ENCODE measurements at regions of chr3 and their contacts with region 1.

Region 1: DNA sequence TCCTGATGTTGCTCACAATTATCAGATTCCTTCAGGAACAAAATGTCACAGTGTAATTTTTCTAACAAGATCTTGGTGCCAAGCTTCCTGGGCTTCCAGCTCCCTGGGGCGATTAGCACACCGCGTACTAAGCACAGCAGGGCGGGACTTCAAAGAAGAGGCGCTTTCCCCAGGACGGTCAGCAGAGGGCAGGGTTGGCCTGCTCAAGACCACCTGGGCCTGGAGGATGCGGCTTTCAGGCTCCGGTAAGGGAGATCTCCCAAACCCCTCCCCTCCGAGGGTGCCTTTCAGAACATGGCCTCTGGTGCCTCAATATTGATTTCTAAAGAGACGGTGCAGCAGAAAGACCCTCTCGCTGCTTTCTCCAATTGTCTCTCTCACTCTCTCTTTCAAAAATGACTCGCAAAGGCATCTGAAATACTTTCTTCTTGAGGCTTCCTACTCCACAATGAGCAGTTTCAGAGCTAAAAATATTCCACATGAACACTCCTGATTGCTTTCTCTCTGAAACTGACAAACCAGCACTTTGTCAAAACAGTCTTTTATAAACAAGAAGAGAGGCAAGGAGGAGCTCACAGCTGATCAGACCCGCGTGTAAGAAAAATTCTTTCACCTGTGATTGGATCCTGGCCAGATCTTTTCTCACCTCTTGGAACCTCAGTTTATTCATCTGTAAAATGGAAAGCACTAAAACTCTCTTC is 154.0 kb downstream of the ADAMTS9 start:
- DNase-seq: peak; percentile 87
- ATAC-seq: peak; percentile 98
- H3K4me3 ChIP-seq: no peak overlapping the region
- H3K27ac ChIP-seq: no peak overlapping the region
- H3K4me1 ChIP-seq: peaks cover 3% of the 10 kb centered on the region; the same call in 1 of the 2 replicates
- H3K27me3 ChIP-seq: no peaks in the 10 kb centered on the region; the same call in 1 of the 2 replicates
- CTCF ChIP-seq: peak; percentile 86
- POLR2A ChIP-seq: no peak
- RAD21 ChIP-seq: peak; percentile 92

Region 2: GRCh38 chr3:64501298-64501906 is 32.4 kb before region 1 on chr3:
- CTCF ChIA-PET with region 1: interaction called, 10 read pairs
- POLR2A ChIA-PET with region 1: interaction called, 4 read pairs
- dilution Hi-C with region 1: no loop called
- in situ Hi-C with region 1: no loop called
- intact Hi-C with region 1: no loop called
- DNase-seq: peak; percentile 97
- ATAC-seq: peak; percentile 88
- H3K4me3 ChIP-seq: no peak overlapping the region
- H3K27ac ChIP-seq: peak overlapping the region; percentile 97
- H3K4me1 ChIP-seq: peaks cover 9% of the 10 kb centered on the region
- H3K27me3 ChIP-seq: no peaks in the 10 kb centered on the region
- CTCF ChIP-seq: no peak
- POLR2A ChIP-seq: no peak
- RAD21 ChIP-seq: no peak

Region 3: DNA sequence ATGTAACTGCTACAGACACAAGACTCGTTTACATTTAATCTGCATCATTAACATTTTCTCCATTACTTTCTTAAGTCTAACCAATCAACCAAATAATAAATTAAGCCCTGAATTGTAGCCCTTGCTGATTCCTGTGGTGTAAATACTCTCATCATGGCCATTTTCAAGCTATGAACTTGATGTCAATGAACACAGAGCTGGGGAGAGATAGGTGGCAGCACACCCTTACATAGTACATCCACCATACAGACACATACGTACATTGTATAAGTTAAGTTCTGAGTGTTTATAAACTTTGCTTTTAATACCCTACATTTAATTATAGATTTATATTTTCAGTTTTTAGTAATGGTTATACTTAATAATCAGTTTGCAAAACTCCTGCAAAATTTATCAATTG is 72.4 kb after region 1 on chr3:
- CTCF ChIA-PET with region 1: no interaction called
- POLR2A ChIA-PET with region 1: no interaction called
- dilution Hi-C with region 1: no loop called
- in situ Hi-C with region 1: no loop called
- intact Hi-C with region 1: no loop called
- DNase-seq: no peak
- ATAC-seq: no peak
- H3K4me3 ChIP-seq: no peak overlapping the region
- H3K27ac ChIP-seq: no peak overlapping the region
- H3K4me1 ChIP-seq: no peaks in the 10 kb centered on the region
- H3K27me3 ChIP-seq: no peaks in the 10 kb centered on the region
- CTCF ChIP-seq: no peak
- POLR2A ChIP-seq: no peak
- RAD21 ChIP-seq: no peak

Region 4: DNA sequence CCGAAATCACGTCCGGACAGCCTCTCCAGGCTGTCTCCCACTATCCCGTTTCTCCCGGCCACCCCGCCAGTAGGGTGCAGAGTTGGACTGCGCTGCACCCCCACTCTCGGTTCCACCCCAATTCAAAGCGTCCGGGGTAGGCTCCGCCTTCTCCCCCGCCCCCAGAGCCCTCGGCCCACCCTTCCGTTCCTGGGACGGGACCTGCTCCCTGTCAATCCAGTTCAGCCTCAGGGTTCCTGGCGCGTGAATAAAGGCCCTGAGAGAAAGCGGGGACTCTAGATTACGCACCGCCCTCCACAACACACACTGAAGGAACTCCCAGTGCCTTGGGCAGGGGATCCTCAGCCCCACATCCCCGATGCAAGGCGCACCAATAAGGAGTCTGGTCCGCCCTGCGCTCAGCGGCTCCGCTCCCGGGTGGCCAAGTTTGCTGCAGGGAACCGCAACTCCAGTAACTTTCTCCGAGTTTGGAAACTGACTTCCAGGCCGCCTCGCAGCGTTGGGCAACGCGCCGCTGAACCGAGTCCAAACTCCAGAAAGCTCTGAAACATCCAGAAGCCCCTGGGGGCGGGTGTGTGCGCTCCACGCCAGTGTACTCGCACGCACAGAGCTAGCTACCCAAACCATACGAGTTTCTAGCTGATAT is 152.2 kb after region 1 on chr3:
- CTCF ChIA-PET with region 1: no interaction called
- POLR2A ChIA-PET with region 1: no interaction called
- dilution Hi-C with region 1: no loop called
- in situ Hi-C with region 1: no loop called
- intact Hi-C with region 1: loop called (anchors 2 kb)
- DNase-seq: peak; percentile 88
- ATAC-seq: peak; percentile 83
- H3K4me3 ChIP-seq: peak overlapping the region; percentile 64
- H3K27ac ChIP-seq: peak overlapping the region; percentile 89
- H3K4me1 ChIP-seq: peaks cover 3% of the 10 kb centered on the region; the same call in 1 of the 2 replicates
- H3K27me3 ChIP-seq: no peaks in the 10 kb centered on the region
- CTCF ChIP-seq: peak; percentile 35
- POLR2A ChIP-seq: peak; percentile 29
- RAD21 ChIP-seq: no peak

Region 5: GRCh38 chr3:65245133-65246063 is 711.6 kb after region 1 on chr3:
- CTCF ChIA-PET with region 1: interaction called, 3 read pairs
- POLR2A ChIA-PET with region 1: no interaction called
- dilution Hi-C with region 1: no loop called
- in situ Hi-C with region 1: loop called (anchors 10 kb)
- intact Hi-C with region 1: loop called (anchors 1 kb)
- DNase-seq: peak; percentile 1
- ATAC-seq: no peak
- H3K4me3 ChIP-seq: no peak overlapping the region
- H3K27ac ChIP-seq: no peak overlapping the region
- H3K4me1 ChIP-seq: no peaks in the 10 kb centered on the region
- H3K27me3 ChIP-seq: peaks cover 7% of the 10 kb centered on the region
- CTCF ChIP-seq: peak; percentile 24; the same call in 1 of the 2 replicates
- POLR2A ChIP-seq: no peak
- RAD21 ChIP-seq: peak; percentile 25; the same call in 1 of the 2 replicates

Region 6: DNA sequence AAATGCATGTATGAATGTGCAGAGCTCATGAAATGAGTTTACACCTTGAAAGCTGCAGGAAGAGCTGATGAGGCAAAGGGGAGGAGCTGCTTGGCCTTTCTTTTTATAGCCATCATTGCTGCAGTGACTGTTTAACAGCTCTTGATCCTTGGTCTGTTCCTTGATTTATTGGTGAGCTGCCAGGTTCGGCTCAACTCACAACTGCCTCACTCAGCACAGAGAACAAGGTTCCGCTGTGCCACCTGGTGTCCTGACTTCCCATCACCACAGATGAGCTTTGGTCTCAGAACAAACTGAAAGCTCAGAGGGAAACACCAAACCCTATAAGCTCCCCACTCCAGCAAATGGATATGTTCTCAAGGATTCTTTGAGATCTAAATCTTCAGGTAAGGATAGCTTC is 878.8 kb after region 1 on chr3:
- CTCF ChIA-PET with region 1: no interaction called
- POLR2A ChIA-PET with region 1: no interaction called
- dilution Hi-C with region 1: no loop called
- in situ Hi-C with region 1: loop called (anchors 25 kb)
- intact Hi-C with region 1: no loop called
- DNase-seq: no peak
- ATAC-seq: no peak
- H3K4me3 ChIP-seq: no peak overlapping the region
- H3K27ac ChIP-seq: no peak overlapping the region
- H3K4me1 ChIP-seq: peaks cover 1% of the 10 kb centered on the region; the same call in 1 of the 2 replicates
- H3K27me3 ChIP-seq: no peaks in the 10 kb centered on the region
- CTCF ChIP-seq: no peak
- POLR2A ChIP-seq: no peak
- RAD21 ChIP-seq: no peak

Region 7: GRCh38 chr3:65732051-65732935 is 1198.5 kb after region 1 on chr3:
- CTCF ChIA-PET with region 1: interaction called, 4 read pairs
- POLR2A ChIA-PET with region 1: no interaction called
- dilution Hi-C with region 1: no loop called
- in situ Hi-C with region 1: loop called (anchors 25 kb)
- intact Hi-C with region 1: loop called (anchors 2 kb)
- DNase-seq: peak; percentile 80
- ATAC-seq: peak; percentile 86
- H3K4me3 ChIP-seq: no peak overlapping the region
- H3K27ac ChIP-seq: no peak overlapping the region
- H3K4me1 ChIP-seq: peaks cover 8% of the 10 kb centered on the region
- H3K27me3 ChIP-seq: no peaks in the 10 kb centered on the region
- CTCF ChIP-seq: peak; percentile 82
- POLR2A ChIP-seq: no peak
- RAD21 ChIP-seq: peak; percentile 88

Region 8: GRCh38 chr3:66195347-66195783 is 1661.6 kb after region 1 on chr3:
- CTCF ChIA-PET with region 1: no interaction called
- POLR2A ChIA-PET with region 1: no interaction called
- dilution Hi-C with region 1: no loop called
- in situ Hi-C with region 1: loop called (anchors 25 kb)
- intact Hi-C with region 1: no loop called
- DNase-seq: peak; percentile 68
- ATAC-seq: peak; percentile 98
- H3K4me3 ChIP-seq: peak overlapping the region; percentile 38; the same call in 1 of the 2 replicates
- H3K27ac ChIP-seq: no peak overlapping the region
- H3K4me1 ChIP-seq: no peaks in the 10 kb centered on the region
- H3K27me3 ChIP-seq: peaks cover 3% of the 10 kb centered on the region; the same call in 1 of the 2 replicates
- CTCF ChIP-seq: peak; percentile 52
- POLR2A ChIP-seq: no peak
- RAD21 ChIP-seq: peak; percentile 66

Measured in IMR-90 (cell line).